Activated naive CD4-positive, alpha-beta T cell treated with anti-CD3 and anti-CD28 coated beads for 36 hours (primary cell): ENCODE measurements at regions of chr3 and their contacts with region 1.

Region 1: GRCh38 chr3:157174649-157175498 is 14.9 kb upstream of the CCNL1 start:
- DNase-seq: peak; percentile 99
- H3K4me3 Mint-ChIP-seq: peak overlapping the region; percentile 85
- H3K27ac Mint-ChIP-seq: peak overlapping the region; percentile 95
- H3K4me1 Mint-ChIP-seq: peaks cover 25% of the 10 kb centered on the region
- H3K27me3 Mint-ChIP-seq: no peaks in the 10 kb centered on the region

Region 2: GRCh38 chr3:156554842-156555687 is 619.8 kb before region 1 on chr3 and contains the start of gene SSR3:
- CTCF ChIA-PET with region 1: no interaction called
- intact Hi-C with region 1: loop called (anchors 1 kb)
- DNase-seq: peak; percentile 99
- H3K4me3 Mint-ChIP-seq: peak within 1 kb of the TSS; percentile 90
- H3K27ac Mint-ChIP-seq: peak within 1 kb of the TSS; percentile 86
- H3K4me1 Mint-ChIP-seq: peaks cover 40% of the 10 kb centered on the region
- H3K27me3 Mint-ChIP-seq: no peaks in the 10 kb centered on the region
- total RNA-seq, gene SSR3: 128 to 138 TPM

Region 3: DNA sequence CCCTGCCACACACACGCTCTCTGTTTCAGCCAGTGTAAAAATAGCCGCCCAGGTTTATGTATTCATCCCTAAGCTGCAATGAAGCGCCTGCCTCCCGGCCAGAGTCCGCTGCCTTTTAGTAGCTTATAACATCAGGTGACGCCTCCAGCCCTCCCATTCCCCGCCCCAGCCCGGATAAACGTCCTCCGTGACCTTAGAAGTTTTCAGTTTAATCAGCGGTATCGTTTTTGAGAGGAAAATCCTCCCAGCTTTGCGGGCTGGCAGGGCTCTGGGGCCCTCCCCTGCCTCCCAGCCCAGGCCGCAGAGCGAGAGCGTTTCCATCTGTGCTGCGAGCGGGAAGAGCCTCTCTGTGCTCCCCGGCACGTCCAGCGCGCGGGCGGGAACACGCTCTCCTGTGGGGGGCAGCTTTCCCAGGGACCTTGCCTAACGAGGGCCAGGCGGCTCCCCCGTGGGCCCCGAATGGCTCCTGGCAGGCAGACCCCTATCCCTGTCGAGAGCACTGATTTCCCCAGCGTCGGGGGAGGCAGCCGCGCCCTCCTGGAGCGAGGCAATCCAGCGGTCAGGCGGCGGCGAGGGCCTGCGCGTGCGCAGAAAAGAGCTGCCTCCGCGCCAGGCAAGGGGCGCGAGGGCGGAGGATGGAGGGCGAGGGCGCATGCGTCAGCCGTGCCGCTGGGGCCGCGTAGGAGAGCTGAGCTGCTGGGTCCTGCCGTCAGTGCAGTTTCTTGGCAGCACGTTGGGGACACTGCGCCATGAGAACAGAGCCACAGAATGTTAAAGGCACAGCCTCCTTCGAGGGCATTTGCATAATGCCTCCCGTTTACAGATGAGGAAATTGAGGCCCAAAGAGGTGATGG is 86.0 kb before region 1 on chr3:
- CTCF ChIA-PET with region 1: no interaction called
- intact Hi-C with region 1: loop called (anchors 1 kb)
- DNase-seq: peak; percentile 94
- H3K4me3 Mint-ChIP-seq: peak overlapping the region; percentile 73
- H3K27ac Mint-ChIP-seq: peak overlapping the region; percentile 96
- H3K4me1 Mint-ChIP-seq: peaks cover 51% of the 10 kb centered on the region
- H3K27me3 Mint-ChIP-seq: peaks cover 4% of the 10 kb centered on the region

Region 4: GRCh38 chr3:157201648-157202278 is 26.9 kb after region 1 on chr3:
- CTCF ChIA-PET with region 1: interaction called, 4 read pairs
- intact Hi-C with region 1: loop called (anchors 1 kb)
- DNase-seq: no peak
- H3K4me3 Mint-ChIP-seq: no peak overlapping the region
- H3K27ac Mint-ChIP-seq: no peak overlapping the region
- H3K4me1 Mint-ChIP-seq: no peaks in the 10 kb centered on the region
- H3K27me3 Mint-ChIP-seq: no peaks in the 10 kb centered on the region

Region 5: DNA sequence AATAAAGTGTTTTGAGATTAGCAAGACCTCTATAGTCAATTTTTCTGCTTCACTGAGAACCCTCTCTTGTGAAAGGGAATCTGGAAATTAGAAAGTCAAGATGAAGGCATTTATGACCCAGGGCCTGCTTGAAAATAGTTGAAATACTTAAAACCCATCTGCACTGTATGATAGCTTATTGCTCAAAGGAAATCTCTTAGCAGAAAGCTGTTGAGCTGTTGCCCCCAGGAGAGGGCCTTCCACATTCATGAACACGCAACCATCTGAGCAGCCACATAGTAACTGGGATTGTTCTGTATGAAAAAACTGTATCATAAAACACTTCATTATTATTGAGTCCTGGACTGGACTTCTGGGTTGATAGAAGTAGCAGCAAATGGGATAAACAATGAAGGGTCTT is 155.3 kb after region 1 on chr3:
- CTCF ChIA-PET with region 1: no interaction called
- intact Hi-C with region 1: no loop called
- DNase-seq: no peak
- H3K4me3 Mint-ChIP-seq: no peak overlapping the region
- H3K27ac Mint-ChIP-seq: no peak overlapping the region
- H3K4me1 Mint-ChIP-seq: no peaks in the 10 kb centered on the region
- H3K27me3 Mint-ChIP-seq: no peaks in the 10 kb centered on the region

Region 6: DNA sequence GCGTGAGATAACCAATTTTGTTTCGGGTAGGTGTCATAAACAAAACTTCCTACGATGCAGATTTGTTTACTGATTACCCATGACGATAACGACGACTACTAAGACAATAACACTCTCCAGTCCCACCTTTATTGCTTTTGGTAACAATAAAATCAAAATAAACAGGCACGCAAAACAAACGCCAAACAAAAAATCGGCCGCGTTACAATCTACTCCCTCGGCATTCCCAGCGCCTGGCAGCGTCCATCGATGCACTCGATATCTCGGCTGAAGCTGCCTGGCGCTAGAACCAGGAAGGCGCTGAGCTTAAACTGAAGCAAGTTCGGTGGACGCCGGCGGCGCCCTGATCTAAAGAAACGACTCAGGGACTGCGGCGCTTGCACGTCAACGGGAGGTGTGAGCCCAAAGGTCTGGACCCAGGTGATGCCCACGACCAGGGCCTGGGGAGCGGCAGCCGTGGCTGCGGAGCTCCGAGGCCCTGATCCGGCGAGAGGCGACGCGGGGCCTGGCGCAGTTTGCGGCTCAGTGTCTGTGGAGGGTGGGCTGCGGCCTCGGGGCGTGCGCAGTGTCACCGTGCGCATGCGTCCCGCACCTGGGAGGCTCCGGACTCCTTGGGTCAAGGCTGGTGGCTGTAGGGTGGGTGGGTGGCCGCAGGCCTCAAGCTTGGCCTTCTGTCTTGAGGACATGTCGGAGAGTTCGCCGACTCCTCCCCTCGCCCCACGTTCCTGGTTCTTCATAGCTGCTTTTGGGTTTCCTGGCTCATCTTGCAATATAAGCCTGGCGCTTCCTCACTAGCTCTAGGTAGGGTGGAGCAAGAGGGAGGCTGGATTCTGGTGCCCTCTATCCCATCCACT is 935.2 kb after region 1 on chr3 and contains the start of gene RSRC1:
- CTCF ChIA-PET with region 1: no interaction called
- intact Hi-C with region 1: loop called (anchors 2 kb)
- DNase-seq: peak; percentile 86
- H3K4me3 Mint-ChIP-seq: peak within 1 kb of the TSS; percentile 97
- H3K27ac Mint-ChIP-seq: peak within 1 kb of the TSS; percentile 77
- H3K4me1 Mint-ChIP-seq: peaks cover 58% of the 10 kb centered on the region
- H3K27me3 Mint-ChIP-seq: peaks cover 34% of the 10 kb centered on the region
- total RNA-seq, gene RSRC1: 48.4 to 50.1 TPM